ENCODE measurements at regions of chr7 and their contacts with region 1.

Region 1: GRCh38 chr7:142866361-142867058 is 11.6 kb downstream of the EPHB6 start:
- DNase-seq: peak in 2 of 9 experiments; percentile 35 to 40
- ATAC-seq: no peak
- H3K4me3 ChIP-seq: no peak overlapping the region
- H3K4me3 Mint-ChIP-seq: no peak overlapping the region
- H3K27ac ChIP-seq: no peak overlapping the region
- H3K27ac Mint-ChIP-seq: no peak overlapping the region
- H3K4me1 ChIP-seq: no peaks in the 10 kb centered on the region
- H3K4me1 Mint-ChIP-seq: no peaks in the 10 kb centered on the region
- H3K27me3 ChIP-seq: no peaks in the 10 kb centered on the region
- H3K27me3 Mint-ChIP-seq: no peaks in the 10 kb centered on the region
- CTCF ChIP-seq: no peak

Region 2: DNA sequence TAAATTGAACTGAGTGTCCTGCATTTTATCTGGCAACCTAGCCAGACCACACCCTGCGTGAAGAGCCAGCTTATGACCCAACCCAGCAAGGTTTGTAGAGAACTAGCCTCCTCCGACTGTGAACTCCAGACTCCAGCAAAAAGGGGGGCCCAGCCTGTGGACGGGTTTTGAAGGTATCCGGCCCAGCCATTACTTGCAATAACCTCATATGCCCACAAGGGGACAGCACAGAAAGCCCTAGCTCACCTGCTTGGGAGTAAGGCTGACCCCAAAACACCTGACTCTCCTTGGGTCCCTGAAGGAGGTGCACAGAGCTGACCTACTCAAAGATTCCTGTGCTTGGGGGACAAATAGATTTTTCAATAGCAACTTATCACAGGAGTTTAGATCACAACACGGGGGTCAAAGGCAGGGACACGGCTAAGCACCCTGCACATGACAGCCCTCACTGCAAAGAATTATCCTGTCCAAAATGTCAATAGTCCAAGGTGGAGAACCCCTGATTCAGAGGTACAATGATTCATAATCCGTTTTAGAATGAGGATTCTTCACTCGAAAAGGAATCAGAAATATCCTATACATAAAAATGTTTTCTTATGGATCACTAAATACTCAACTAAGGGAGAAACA is 14.5 kb after region 1 on chr7:
- CTCF ChIA-PET with region 1: interaction called, 14 read pairs
- POLR2A ChIA-PET with region 1: no interaction called
- intact Hi-C with region 1: no loop called
- DNase-seq: peak; percentile 14 to 70 (median 47)
- ATAC-seq: peak; percentile 80
- H3K4me3 ChIP-seq: no peak overlapping the region
- H3K4me3 Mint-ChIP-seq: no peak overlapping the region
- H3K27ac ChIP-seq: no peak overlapping the region
- H3K27ac Mint-ChIP-seq: no peak overlapping the region
- H3K4me1 ChIP-seq: no peaks in the 10 kb centered on the region
- H3K4me1 Mint-ChIP-seq: no peaks in the 10 kb centered on the region
- H3K27me3 ChIP-seq: peaks cover 0 to 2% of the 10 kb centered on the region in 2 experiments
- H3K27me3 Mint-ChIP-seq: no peaks in the 10 kb centered on the region
- CTCF ChIP-seq: peak; percentile 74

Measured in CD8-positive, alpha-beta T cell (primary cell).